Colonic mucosa (tissue), 4 donors: ENCODE measurements at regions of chr2 and their contacts with region 1.

Region 1: GRCh38 chr2:149017116-149017985 is 21.1 kb upstream of the LYPD6B start:
- DNase-seq: peak; percentile 87
- H3K4me3 ChIP-seq: no peak overlapping the region
- H3K27ac ChIP-seq: no peak overlapping the region
- H3K4me1 ChIP-seq: no peaks in the 10 kb centered on the region
- H3K27me3 ChIP-seq: no peaks in the 10 kb centered on the region
- CTCF ChIP-seq: peak; percentile 93

Region 2: GRCh38 chr2:148971547-148971946 is 45.8 kb before region 1 on chr2:
- intact Hi-C with region 1: no loop called
- DNase-seq: no peak
- H3K4me3 ChIP-seq: no peak overlapping the region
- H3K27ac ChIP-seq: no peak overlapping the region
- H3K4me1 ChIP-seq: no peaks in the 10 kb centered on the region
- H3K27me3 ChIP-seq: no peaks in the 10 kb centered on the region
- CTCF ChIP-seq: no peak

Region 3: GRCh38 chr2:149314687-149315086 is 297.3 kb after region 1 on chr2:
- intact Hi-C with region 1: loop called (anchors 5 kb)
- DNase-seq: no peak
- H3K4me3 ChIP-seq: no peak overlapping the region
- H3K27ac ChIP-seq: no peak overlapping the region
- H3K4me1 ChIP-seq: no peaks in the 10 kb centered on the region
- H3K27me3 ChIP-seq: no peaks in the 10 kb centered on the region
- CTCF ChIP-seq: no peak

Region 4: DNA sequence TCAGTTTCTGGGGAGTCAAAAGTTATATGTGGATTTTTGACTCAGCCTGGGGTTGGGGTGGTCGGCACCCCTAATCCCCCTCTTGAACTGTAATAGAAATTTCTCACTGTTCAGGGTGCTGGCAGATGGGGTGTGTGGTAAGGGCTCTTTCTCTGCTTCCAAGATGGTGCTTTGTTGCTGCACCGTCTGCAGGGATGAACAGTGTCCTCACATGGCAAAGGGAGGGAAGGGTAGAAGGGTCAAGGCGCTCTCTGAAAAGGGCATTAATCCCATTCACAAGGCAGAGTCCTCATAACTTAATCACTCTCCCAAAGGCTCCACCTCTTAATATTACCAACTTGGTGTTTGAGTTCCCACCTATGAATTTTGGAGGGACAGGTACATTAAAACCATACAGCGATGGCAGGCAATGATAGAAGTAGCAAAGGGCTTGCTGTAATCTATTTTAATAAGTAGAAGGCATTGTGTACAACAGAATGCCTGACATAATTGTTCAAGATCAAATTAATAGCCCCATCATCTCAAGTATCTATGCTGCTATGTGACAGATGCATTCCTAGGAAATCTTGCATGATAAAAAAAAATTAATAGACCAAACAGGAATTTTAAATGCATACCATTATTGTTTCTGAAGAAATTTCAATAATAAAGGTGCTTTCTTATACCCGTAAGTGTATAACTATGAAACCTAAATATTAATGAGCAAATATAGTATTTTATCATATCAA is 542.2 kb after region 1 on chr2:
- intact Hi-C with region 1: loop called (anchors 5 kb)
- DNase-seq: no peak
- H3K4me3 ChIP-seq: no peak overlapping the region
- H3K27ac ChIP-seq: no peak overlapping the region
- H3K4me1 ChIP-seq: no peaks in the 10 kb centered on the region
- H3K27me3 ChIP-seq: no peaks in the 10 kb centered on the region
- CTCF ChIP-seq: no peak

Region 5: GRCh38 chr2:149692961-149693396 is 675.6 kb after region 1 on chr2:
- intact Hi-C with region 1: no loop called
- DNase-seq: no peak
- H3K4me3 ChIP-seq: no peak overlapping the region
- H3K27ac ChIP-seq: no peak overlapping the region
- H3K4me1 ChIP-seq: no peaks in the 10 kb centered on the region
- H3K27me3 ChIP-seq: no peaks in the 10 kb centered on the region
- CTCF ChIP-seq: no peak